ENCODE measurements at regions of chr9 and their contacts with region 1.

Region 1: DNA sequence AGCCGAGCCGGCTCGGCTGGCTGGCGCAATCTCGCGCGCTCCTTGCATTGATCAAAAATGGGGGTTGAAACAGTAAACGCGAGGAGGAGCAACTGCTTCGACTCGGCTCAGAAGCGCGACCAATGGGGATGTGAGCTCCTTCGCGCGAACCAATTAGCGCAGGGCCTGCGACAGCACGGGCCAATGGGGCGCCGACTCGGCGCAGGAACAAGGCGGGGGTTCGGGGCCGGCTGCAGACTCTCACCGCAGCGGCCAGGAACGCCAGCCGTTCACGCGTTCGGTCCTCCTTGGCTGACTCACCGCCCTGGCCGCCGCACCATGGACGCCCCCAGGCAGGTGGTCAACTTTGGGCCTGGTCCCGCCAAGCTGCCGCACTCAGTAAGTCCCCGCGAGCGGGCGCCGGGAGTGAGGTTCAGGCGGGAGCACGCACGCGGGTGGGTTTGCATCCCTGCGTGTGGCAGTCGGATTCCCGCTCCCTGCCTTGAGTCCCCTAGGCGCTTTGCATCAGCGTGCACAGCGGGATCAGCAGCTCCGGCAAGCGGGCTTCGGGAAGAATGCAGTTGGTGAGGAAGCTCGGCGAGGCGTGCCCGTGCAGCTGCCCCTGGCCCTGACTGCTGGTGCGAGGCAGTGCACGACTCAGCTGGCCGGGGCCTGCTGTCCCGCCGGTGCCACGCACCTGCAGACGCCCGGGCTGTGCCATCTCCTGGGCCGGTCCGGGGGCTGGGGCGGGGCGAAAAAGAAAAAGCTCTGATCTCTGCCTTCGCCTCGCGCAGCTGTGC is at the start of gene PSAT1:
- DNase-seq: peak; percentile 92
- ATAC-seq: peak; percentile 98
- H3K4me3 Mint-ChIP-seq: peak within 1 kb of the TSS; percentile 96
- H3K27ac Mint-ChIP-seq: peak within 1 kb of the TSS; percentile 98
- H3K4me1 Mint-ChIP-seq: peaks cover 46% of the 10 kb centered on the region
- H3K27me3 Mint-ChIP-seq: no peaks in the 10 kb centered on the region
- total RNA-seq, gene PSAT1: 71.9 to 78.9 TPM

Region 2: GRCh38 chr9:78235756-78236538 is 61.1 kb before region 1 on chr9 and contains the start of gene CEP78:
- POLR2A ChIA-PET with region 1: interaction called, 24 read pairs
- DNase-seq: peak; percentile 88
- ATAC-seq: peak; percentile 96
- H3K4me3 Mint-ChIP-seq: peak within 1 kb of the TSS; percentile 75
- H3K27ac Mint-ChIP-seq: peak within 1 kb of the TSS; percentile 95
- H3K4me1 Mint-ChIP-seq: peaks cover 34% of the 10 kb centered on the region
- H3K27me3 Mint-ChIP-seq: no peaks in the 10 kb centered on the region
- total RNA-seq, gene CEP78: 48.9 to 54.8 TPM

Region 3: DNA sequence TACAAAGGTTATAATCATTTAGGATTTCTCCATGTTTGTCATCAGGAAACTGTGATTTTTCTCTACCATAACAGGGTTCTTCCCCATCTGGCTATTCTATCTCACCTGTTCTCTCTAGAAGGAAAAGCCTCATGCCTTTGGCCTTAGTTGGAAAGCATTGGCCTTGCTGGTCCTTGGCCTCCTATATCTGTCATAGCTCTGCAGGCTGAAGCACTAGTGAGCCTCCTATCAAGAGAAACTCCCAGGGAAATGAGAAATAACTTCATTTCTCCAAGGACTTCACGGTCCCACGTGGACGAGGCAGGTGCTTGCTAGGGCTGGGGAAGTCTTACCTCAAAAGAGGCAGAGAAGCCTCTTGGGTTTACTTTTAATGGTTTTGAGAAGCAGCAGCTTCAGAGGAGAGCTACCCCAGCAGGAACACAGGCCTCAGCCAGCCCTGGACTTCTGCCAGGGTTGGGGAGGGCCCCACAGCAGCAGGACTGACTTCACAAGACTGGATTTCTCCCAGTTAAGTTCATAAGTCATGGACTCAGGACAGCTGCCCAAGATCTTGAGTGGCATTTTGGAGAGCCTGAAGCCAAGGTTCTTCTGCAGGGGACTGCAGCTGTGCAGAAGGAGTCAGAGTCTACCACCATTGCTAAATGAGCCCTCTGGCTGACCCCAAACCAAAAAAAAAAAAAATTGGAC is 16.0 kb before region 1 on chr9:
- POLR2A ChIA-PET with region 1: interaction called, 11 read pairs
- DNase-seq: no peak
- ATAC-seq: no peak
- H3K4me3 Mint-ChIP-seq: no peak overlapping the region
- H3K27ac Mint-ChIP-seq: no peak overlapping the region
- H3K4me1 Mint-ChIP-seq: peaks cover 3% of the 10 kb centered on the region
- H3K27me3 Mint-ChIP-seq: peaks cover 7% of the 10 kb centered on the region

Region 4: DNA sequence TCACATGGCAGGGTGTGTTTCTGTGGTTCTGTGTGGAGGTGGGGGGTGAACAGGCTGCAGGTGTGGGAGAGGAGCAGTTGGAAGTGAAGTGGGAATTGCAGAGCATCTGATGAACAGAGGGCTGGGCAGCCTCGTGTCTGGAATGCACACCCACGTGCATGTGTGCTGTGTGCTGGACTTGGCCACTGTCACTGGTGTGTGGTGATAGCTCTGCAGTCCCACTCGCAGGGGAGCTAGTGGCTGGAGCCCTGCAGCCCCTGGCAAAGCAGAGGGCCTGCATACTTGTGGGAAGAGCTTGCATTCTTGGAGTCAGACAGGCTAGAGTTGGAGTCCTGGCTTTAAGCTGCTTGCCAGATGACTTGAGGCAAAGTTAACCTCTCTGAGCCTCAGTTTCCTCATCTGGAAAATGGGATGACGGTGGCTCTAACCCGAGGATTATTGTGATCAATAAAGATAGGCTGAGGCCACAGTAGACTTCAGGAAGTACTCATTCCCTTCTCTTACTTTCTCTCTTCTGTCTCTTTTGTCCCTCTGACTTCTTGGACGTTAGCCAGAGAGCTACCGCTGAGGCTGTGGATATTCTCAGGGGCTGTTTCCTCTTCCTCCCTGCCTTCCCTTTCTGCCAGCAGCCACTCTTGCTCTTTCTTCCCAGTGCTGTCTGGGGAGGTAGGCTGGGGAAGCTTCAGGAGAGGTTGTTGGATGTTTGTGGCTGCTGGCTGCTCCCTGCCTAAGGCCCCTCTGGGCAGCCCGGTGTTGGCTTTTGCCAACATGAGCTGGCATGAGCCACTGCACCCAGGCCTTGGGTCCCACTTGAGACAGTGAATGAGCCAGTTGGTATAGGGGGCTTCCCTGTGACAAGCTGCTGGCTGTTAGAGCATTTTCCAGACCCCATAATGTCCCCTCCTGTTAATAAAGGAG is 18.1 kb after region 1 on chr9:
- POLR2A ChIA-PET with region 1: interaction called, 22 read pairs
- DNase-seq: no peak
- ATAC-seq: no peak
- H3K4me3 Mint-ChIP-seq: no peak overlapping the region
- H3K27ac Mint-ChIP-seq: no peak overlapping the region
- H3K4me1 Mint-ChIP-seq: peaks cover 2% of the 10 kb centered on the region
- H3K27me3 Mint-ChIP-seq: no peaks in the 10 kb centered on the region